ENCODE measurements at regions of chr11 and their contacts with region 1.

Region 1: DNA sequence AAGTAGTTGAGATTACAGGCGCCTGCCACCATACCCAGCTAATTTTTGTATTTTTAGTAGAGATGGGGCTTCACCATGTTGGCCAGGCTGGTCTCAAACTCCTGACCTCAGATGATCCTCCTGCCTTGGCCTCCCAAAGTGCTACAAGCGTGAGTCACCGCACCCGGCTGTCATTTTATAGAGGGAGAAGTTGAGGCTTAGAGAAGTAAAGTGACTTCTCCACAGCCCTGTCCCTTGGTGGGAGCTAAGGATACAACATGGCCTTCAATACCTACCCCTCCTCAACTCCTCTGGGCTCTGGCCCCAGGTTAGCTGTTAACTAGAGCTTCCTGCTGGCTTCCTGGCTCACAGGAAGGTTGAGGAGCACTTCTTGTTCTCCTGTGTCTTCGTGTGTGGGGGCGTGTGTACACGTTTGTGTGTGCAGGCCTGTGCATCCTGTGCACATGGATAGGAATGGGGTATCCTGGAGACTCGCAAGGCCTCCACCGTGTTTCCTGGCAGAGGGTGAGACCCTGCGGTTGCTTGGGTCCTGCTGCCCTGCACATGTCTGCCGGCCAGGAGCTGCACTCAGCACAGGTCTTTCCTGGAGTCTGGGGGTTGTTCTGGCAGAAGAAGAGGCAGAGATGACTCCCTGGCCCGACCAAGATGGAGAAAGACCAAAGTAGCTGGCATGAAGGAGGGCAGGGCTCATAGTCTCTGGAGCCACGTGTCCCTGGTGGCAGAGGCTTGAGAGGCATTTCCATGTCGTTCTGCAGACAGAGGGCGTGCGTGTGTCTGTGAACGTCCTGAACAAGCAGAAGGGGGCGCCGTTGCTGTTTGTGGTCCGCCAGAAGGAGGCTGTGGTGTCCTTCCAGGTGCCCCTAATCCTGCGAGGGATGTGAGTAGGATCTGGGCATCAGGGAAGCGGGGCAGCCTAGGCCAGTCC is 2.4 kb downstream of the SIDT2 start:
- DNase-seq: peak; percentile 83
- ATAC-seq: peak; percentile 10

Region 2: GRCh38 chr11:117170210-117170609 is 10.7 kb before region 1 on chr11:
- intact Hi-C with region 1: no loop called
- DNase-seq: no peak
- ATAC-seq: no peak

Region 3: DNA sequence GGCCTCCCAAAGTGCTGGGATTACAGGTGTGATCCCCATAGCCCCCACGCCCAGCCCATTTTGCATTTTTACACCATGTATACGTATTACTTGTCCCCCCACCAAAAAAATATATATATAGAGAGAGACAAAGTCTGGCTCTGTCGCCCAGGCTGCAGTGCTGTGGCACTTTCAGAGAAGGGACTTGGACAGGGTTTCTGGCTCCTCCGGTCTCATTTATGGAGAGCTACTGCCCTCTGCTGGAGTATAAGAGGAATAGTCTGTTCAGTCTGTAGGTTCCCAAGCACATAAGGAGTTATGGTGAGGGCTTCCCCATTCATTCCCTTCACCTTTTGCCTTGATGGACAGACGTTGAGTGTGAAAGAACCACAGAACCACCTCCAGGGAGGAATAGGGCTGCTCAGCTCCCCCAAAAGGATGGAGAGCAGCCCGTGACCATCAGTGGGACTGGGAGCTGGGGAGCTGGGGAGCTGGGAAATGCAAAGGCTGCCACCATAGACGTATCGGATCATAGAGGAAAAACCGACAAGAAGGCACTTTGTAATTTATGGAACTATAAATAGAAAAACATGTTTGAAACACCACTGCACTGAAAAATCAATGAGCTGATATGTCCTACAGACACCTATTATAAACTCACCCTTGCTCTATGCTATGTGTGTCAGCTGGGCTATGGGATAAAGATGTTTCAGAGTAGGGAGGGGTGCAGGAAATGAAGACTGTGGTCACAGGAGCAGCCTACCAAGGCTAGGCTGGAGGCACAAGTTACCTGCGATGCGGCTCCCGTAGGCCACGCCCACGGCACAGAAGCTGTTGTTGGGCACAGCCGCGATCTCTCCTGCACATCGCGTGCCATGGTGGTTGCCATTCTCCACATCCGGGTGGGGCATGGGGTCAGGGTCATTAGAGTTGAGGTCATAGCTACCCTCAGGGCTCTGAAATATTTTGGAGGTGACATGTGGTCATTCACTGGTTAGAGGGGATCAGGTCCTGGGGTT is 45.8 kb after region 1 on chr11:
- intact Hi-C with region 1: loop called (anchors 5 kb)
- DNase-seq: no peak
- ATAC-seq: peak; percentile 76